GM10248 (cell line): ENCODE measurements at regions of chr6 and their contacts with region 1.

Region 1: GRCh38 chr6:32244946-32245398 is 21.1 kb upstream of the NOTCH4 start:
- DNase-seq: peak; percentile 83
- CTCF ChIP-seq: peak; percentile 95

Region 2: DNA sequence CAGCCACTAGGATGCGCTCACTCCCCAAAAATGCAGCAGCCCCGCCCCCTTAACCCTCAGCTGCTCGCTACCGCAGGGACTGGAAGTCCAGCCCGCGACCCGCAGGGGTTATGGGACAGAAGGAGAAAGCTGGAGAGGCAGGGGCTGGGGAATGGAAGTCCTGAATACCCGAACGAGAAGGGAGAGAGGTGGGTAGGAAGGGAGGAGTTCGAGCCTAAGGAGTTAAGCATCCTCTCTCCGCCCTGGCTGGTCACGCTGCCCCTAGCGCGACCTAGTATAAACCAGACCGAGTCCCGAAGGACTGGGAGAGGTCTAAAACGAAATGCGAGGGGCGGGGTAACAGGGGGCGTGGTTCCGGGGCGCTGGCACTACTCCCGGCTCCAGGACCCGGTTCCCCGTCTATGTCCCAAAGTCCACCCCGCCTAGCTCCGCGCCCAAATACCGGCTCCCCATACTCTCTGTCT is 515.4 kb before region 1 on chr6:
- CTCF ChIA-PET with region 1: no interaction called
- POLR2A ChIA-PET with region 1: no interaction called
- DNase-seq: peak; percentile 79
- CTCF ChIP-seq: peak; percentile 87

Region 3: DNA sequence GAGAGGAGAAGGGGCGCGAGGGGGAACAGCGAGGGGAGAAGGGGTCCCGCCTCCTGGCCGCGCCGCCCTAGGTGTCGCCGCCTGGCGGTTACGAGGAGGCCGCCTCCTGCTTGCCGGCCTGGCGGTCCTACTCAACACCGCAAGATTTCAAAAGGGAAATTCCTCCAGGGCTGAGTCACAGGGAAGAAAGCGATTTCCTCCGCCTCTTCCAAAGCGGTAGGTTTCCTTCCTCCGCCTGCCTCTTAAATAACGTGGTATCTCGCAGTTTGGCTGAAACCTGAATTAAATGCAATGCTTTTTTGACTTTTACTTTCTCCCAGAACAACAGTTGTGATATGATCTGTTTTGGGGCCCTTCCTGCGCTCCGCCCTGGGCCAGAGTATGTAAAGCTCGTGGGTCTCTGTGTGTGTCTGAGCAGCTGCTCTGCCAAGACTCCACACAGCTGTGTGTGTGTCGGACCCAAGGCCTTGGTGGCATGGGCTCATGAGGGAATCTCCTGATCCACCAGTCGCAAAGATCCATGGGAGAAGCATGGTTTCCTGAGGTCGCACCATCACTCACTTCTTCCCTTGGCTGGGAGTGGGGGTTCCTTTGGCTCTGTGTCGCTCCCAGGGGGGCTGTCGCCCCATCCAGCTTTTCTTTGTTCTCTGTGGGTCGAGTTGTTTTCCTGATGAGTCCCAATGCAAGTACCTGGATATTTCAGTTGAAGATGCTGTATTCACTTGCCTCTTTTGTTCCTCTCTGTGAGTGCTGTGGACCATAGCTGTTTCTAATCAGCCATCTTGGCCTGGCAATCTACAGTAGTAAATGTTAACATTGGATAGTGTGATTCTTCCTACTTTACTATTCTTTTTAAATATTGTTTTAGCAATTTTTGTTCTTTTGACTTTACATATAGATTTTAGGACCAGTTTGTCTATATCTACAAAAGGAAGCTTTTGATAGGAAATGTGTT is 10.5 kb after region 1 on chr6:
- CTCF ChIA-PET with region 1: interaction called, 39 read pairs
- POLR2A ChIA-PET with region 1: no interaction called
- DNase-seq: peak; percentile 61
- CTCF ChIP-seq: peak; percentile 70

Region 4: GRCh38 chr6:32483968-32484636 is 239.1 kb after region 1 on chr6:
- CTCF ChIA-PET with region 1: no interaction called
- POLR2A ChIA-PET with region 1: no interaction called
- DNase-seq: no peak
- CTCF ChIP-seq: no peak